ENCODE measurements at regions of chr3 and their contacts with region 1.

Region 1: GRCh38 chr3:58299839-58300516 is 6.1 kb upstream of the RPP14 start:
- DNase-seq: peak in 1 of 4 donors; percentile 54
- ATAC-seq: peak; percentile 53
- H3K4me3 ChIP-seq: no peak overlapping the region
- H3K27ac ChIP-seq: no peak overlapping the region
- H3K4me1 ChIP-seq: no peaks in the 10 kb centered on the region
- H3K27me3 ChIP-seq: peaks cover 0 to 39% of the 10 kb centered on the region in 2 donors
- CTCF ChIP-seq: peak; percentile 28 to 44

Region 2: DNA sequence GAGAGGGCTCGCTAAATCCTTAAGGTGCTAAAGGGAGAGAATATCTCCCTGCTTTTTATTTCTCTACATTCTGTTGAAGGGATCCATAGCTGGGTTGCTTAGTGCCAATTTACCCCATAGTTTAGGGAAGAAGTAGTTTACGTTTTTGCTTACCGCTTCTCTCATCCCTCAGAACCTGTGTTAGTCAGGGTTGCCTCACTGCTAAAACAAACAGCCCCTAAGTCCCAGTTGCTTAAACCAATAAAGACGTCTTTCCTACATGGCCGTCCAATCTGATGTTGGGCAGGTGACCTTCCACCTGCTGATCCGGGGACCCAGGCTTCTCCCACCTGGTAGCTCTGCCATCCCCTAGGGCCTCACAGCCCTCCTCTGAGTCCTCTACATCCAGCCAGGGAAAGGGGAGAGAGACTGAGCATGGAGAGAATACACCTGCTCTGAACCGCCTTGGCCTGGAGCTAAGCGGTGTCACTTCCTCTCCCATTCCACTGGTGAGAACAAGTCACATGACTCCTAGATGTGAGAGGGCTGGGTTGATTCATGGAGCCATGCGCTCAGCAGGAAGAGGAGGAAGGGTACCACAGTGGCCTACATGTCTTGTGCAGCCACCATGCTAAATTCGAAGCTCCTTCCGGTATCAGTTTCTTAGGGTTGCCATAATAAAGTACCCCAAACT is 115.5 kb before region 1 on chr3:
- intact Hi-C with region 1: loop called in 1 of 2 experiments (anchors 2 kb)
- DNase-seq: no peak
- ATAC-seq: no peak
- H3K4me3 ChIP-seq: no peak overlapping the region
- H3K27ac ChIP-seq: no peak overlapping the region
- H3K4me1 ChIP-seq: peaks cover 0 to 6% of the 10 kb centered on the region in 2 donors
- H3K27me3 ChIP-seq: no peaks in the 10 kb centered on the region
- CTCF ChIP-seq: no peak

Region 3: GRCh38 chr3:58249358-58250092 is 50.5 kb before region 1 on chr3:
- intact Hi-C with region 1: loop called in 1 of 2 experiments (anchors 10 kb)
- DNase-seq: peak in 1 of 4 donors; percentile 19
- ATAC-seq: peak; percentile 93
- H3K4me3 ChIP-seq: no peak overlapping the region
- H3K27ac ChIP-seq: no peak overlapping the region
- H3K4me1 ChIP-seq: no peaks in the 10 kb centered on the region
- H3K27me3 ChIP-seq: no peaks in the 10 kb centered on the region
- CTCF ChIP-seq: no peak